AG04449 (cell line): ENCODE measurements at regions of chr3 and their contacts with region 1.

Region 1: DNA sequence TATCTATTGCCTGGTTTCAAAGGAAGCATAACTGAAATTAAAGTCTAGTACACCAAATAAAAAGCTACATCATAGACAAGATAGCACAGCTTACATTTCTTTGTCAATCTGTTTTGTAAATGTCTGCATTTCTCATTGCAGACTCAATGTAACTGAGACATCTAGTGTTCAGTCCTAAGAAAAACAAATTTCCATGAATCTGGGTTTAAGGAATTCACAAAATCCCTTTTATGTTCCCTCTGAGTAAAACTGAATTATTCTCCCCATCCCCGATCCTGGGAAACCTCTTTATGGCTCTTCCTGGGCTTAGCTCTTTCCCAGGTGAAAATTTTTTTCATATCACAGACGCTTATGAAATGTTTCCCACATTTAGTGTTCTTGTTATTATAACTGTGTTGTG is 21.6 kb upstream of the RASA2 start:
- DNase-seq: no peak
- H3K4me3 ChIP-seq: no peak overlapping the region
- CTCF ChIP-seq: peak; percentile 10

Region 2: DNA sequence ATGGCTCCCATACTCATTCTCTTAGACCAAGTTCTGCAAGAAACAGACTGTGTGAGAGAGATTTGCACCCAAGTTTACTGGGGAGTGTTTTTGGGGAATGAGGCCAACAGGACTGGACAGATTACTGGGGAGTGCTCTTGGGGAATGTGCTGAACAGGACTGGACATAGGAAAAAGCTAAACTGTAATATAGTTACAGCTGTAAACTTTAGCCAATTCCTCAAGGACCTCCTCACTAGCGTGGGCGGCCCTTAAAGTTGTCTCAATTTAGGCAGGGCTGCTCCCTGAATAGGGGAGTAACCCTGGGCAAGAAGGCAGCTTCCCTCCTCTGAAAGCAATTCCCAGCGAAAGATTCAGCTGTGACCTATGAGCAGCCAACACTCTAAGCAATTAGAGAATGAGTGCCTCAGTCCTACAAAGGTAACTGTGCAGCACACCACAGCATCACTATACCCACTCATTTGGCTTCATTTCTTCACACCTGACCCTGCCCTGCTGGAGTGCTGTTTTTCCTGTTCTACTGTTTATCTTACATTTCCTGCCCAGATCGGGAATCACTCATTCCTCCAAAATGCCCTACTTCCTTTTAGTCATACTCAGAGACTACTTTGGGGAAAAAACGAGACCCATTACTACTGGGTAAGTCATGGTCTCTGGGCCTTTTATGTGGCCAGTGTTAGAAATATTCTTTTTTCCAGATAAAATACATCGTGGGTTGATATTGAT is 828.7 kb before region 1 on chr3:
- CTCF ChIA-PET with region 1: no interaction called
- POLR2A ChIA-PET with region 1: no interaction called
- DNase-seq: no peak
- H3K4me3 ChIP-seq: no peak overlapping the region
- CTCF ChIP-seq: no peak

Region 3: DNA sequence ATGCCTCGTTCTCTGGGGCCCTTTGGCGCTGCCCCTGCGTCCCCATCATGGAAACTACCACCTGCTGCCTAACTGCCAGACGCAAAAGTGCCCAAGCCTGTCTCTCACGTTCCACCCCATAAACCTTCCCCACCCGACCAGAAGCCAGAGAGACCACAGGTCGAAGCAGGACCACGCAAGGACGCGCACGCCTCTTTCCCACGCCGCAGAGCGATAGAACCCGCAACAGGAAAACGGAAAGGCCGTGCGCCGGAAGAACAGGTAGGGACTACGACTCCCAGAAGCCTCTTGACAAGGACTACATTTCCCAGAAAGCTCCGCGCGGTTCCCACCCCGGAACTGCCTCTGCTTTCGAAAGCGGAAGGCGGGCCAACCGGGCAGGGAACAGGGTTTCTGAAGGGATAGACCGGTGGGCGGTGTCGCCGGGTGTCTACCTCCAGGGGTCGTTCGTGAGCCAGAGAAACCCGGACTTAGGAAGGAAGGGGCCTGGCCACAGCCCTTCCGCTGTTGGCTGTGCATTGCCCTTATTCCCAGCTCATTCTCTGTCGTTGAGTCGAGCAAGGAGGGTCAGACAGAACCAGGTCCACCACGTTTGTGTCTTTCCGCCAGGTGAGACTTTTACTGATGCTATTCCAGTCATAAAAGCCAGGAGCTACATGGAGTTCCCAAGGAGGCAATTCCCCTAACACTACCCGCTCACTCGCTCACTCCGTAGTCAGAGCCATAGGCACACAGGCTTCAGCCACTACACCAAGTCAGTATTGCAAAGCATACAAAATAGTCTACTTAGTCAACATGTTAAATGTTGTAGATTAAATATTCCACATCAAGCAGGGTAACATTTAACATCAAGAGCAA is 153.5 kb before region 1 on chr3:
- CTCF ChIA-PET with region 1: interaction called, 624 read pairs
- POLR2A ChIA-PET with region 1: no interaction called
- DNase-seq: peak; percentile 88
- H3K4me3 ChIP-seq: peak overlapping the region; percentile 96
- CTCF ChIP-seq: peak; percentile 89

Region 4: DNA sequence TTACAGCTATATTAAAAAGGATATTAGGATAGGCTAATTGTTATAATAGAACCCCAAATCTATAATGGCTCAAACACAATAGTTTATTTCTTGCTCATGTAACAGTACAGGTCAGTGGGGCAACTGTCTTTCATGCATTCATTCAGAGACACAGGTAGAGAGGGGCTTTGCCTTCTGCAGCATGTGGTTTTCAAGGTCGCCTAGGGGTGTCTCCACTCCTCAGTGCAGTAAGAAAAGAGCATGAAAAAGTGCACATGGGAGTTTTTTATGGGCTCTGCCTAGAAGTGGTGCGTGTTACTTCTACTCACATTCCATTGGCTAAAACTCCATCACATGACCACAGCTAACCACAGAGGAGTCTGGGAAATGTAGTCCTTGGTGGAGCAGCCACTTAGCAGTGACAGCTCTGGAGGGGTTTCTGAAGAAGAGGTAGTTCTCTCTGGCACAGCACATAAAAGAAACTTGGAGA is 95.1 kb before region 1 on chr3:
- CTCF ChIA-PET with region 1: interaction called, 10 read pairs
- POLR2A ChIA-PET with region 1: no interaction called
- DNase-seq: no peak
- H3K4me3 ChIP-seq: no peak overlapping the region
- CTCF ChIP-seq: peak; percentile 9

Region 5: GRCh38 chr3:141487521-141488252 is 22.5 kb after region 1 on chr3:
- CTCF ChIA-PET with region 1: interaction called, 12 read pairs
- POLR2A ChIA-PET with region 1: no interaction called
- DNase-seq: no peak
- H3K4me3 ChIP-seq: peak overlapping the region; percentile 77
- CTCF ChIP-seq: no peak